ENCODE measurements at regions of chr5 and their contacts with region 1.

Region 1: DNA sequence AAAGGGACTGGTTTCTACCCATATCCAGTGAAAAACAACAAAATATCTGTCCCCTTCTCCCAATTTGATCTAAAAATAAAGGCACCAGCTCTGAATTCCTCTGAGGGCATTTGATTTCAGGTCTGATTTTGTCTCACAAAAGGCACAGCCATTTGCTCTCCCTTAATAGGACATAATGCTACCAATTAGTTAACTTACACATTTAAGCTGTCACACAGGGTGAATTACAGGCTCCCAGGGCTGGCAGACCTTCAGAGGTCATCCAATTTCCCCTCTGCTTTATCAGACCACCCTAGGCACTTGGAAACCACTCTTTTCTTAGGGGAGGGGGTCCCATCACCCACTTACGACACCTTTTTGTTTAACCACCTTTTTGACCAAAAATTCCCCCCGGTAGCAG is 319.9 kb downstream of the SPOCK1 start:
- DNase-seq: no peak
- H3K4me3 ChIP-seq: no peak overlapping the region
- H3K27ac ChIP-seq: no peak overlapping the region
- H3K4me1 ChIP-seq: no peaks in the 10 kb centered on the region
- H3K27me3 ChIP-seq: no peaks in the 10 kb centered on the region
- CTCF ChIP-seq: no peak
- POLR2A ChIP-seq: no peak

Region 2: DNA sequence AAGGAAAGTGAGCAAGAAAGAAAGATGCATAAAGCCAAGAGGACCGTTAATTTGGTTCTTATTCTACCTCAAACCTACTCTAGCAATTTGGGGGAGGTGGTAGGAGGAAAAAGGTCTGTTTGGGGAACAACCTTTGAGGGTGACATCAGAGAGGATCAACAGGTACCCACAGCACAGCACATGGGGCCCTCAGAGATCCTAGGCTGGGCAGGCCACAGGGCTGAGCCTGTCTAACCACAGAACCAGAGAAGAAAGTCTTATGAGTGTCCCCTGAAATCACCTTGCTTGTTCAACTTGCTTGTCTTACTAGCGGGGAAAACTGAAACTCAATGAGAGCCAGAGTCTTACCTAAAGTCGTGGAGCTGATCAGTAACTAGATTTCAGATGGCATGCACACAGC is 65.3 kb before region 1 on chr5:
- intact Hi-C with region 1: loop called (anchors 2 kb)
- DNase-seq: no peak
- H3K4me3 ChIP-seq: no peak overlapping the region
- H3K27ac ChIP-seq: no peak overlapping the region
- H3K4me1 ChIP-seq: no peaks in the 10 kb centered on the region
- H3K27me3 ChIP-seq: no peaks in the 10 kb centered on the region
- CTCF ChIP-seq: no peak
- POLR2A ChIP-seq: no peak

Region 3: DNA sequence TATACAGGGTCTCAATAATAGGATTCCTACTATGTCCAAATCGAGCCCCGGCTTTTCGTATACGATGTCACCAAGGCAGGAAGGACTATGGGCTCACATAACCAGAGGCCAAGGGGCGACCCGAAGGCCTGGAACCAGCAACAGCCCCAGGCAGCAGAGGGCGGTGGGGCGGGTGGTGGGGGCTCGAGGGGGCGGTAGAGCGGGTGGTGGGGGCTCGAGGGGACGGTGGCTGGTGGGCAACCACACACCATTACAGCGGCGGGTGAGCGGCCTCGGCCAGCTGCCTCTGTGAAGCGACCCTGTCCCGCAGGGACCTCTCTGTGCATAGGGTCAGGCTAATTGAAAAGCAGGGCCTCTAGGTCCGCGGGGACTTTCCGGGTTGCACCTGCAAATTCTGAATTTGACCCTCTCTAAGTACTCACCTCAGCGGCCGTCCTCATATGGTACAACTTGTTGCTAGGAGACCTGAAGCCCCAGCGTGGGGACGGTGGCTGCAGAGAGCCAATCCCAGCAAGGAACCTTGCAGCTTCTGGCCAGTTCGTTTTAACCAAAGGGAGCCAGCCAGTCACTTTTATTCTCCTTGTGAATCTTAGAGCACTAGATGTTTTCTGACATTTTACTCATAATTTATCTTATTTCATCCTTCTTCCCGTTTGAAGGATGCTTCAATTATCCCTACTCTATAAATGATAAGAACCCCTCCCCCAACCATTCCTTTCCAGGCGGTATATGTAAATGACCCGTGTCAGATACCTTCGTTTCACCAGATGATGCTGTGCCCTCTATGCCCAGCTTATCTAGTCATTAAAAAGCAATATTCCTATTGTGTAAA is 960.0 kb after region 1 on chr5 and contains the start of gene NME5:
- intact Hi-C with region 1: no loop called
- DNase-seq: peak; percentile 30 to 58
- H3K4me3 ChIP-seq: peak within 1 kb of the TSS; percentile 46 to 68 (median 64)
- H3K27ac ChIP-seq: no peak within 1 kb of the TSS
- H3K4me1 ChIP-seq: no peaks in the 10 kb centered on the region
- H3K27me3 ChIP-seq: no peaks in the 10 kb centered on the region
- CTCF ChIP-seq: no peak
- POLR2A ChIP-seq: no peak
- total RNA-seq, gene NME5: 1.9 to 3.9 (median 2.5) TPM

Measured in breast epithelium (tissue), 4 donors.